Breast epithelium (tissue), 4 donors: ENCODE measurements at regions of chr13 and their contacts with region 1.

Region 1: DNA sequence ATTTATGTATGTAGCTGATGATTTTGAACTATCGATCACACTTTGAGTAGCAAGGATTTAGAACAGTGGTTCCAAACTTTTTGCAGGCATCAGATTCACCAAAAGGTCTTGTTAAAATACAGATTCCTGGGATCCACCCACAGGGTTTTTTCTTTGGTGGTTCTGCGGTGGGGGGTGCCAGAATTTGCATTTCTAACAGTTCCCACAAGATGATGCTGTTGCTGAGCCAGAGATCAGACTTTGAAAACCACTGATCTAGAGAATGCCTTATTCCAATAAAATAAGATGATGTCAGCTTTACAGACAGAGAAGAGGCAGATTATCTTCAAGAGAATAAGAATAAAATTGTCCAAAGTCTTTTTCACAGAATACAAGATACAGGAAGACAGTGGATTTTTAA is 80.9 kb upstream of the SHISA2 start:
- DNase-seq: no peak
- H3K4me3 ChIP-seq: no peak overlapping the region
- H3K27ac ChIP-seq: no peak overlapping the region
- H3K4me1 ChIP-seq: no peaks in the 10 kb centered on the region
- H3K27me3 ChIP-seq: no peaks in the 10 kb centered on the region
- CTCF ChIP-seq: no peak
- POLR2A ChIP-seq: no peak

Region 2: GRCh38 chr13:26095338-26095737 is 37.4 kb before region 1 on chr13:
- intact Hi-C with region 1: loop called (anchors 2 kb)
- DNase-seq: no peak
- H3K4me3 ChIP-seq: no peak overlapping the region
- H3K27ac ChIP-seq: no peak overlapping the region
- H3K4me1 ChIP-seq: no peaks in the 10 kb centered on the region
- H3K27me3 ChIP-seq: no peaks in the 10 kb centered on the region
- CTCF ChIP-seq: no peak
- POLR2A ChIP-seq: no peak